Activated T-helper 1 cell treated with anti-CD3 and anti-CD28 coated beads, Interleukin-12 subunit alpha, Interleukin-12 subunit beta, Interleukin-2, Interleukin-4 antibody, amounts not matched to agents 30 ng/mL and 10 ng/mL and 1 ng/mL, durations not matched to agents 14 hours and 24 hours and 36 hours (primary cell): ENCODE measurements at regions of chr12 and their contacts with region 1.

Region 1: DNA sequence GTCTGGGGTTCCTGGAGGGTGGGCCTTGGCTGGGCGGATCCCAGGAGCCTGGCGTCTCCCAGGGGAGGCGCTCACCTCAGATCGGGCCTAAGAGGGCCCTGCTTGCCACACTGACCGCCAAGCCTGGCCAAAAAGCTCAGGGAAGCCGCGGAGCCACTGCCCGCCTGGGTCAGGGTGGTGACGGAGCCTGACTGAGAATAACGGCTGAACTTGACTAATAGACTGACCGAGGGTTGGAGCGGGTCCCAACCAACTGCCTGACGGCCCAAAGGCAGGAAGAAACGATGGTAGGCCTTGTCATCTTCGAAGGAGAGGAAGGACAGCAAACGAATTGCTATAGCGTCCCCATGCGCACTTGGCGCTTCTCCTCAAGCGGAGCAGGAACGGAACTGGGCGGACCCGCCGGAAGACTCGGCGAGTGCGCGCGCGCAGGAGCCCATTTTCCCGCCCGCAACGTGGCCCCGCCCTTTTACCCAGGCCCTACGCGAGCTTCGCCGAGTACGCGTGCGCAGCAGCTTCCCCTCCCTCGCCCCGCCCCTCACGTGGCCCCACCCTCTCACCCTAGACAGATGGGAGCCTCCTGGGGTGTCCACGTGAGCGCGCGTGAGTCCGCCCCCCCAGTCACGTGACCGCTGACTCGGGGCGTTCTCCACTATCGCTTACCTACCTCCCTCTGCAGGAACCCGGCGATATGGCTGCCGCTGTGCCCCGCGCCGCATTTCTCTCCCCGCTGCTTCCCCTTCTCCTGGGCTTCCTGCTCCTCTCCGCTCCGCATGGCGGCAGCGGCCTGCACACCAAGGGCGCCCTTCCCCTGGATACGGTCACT is at the starts of genes ERP29 and TMEM116:
- DNase-seq: peak; percentile 98
- H3K4me3 Mint-ChIP-seq: peak within 1 kb of the TSS; percentile 87
- H3K27ac Mint-ChIP-seq: peak within 1 kb of the TSS; percentile 89
- H3K4me1 Mint-ChIP-seq: peaks cover 51% of the 10 kb centered on the region
- H3K27me3 Mint-ChIP-seq: no peaks in the 10 kb centered on the region
- total RNA-seq, gene ERP29: 60.9 and 62.5 TPM in 2 replicates
- total RNA-seq, gene TMEM116: 10.6 and 11.0 TPM in 2 replicates

Region 2: DNA sequence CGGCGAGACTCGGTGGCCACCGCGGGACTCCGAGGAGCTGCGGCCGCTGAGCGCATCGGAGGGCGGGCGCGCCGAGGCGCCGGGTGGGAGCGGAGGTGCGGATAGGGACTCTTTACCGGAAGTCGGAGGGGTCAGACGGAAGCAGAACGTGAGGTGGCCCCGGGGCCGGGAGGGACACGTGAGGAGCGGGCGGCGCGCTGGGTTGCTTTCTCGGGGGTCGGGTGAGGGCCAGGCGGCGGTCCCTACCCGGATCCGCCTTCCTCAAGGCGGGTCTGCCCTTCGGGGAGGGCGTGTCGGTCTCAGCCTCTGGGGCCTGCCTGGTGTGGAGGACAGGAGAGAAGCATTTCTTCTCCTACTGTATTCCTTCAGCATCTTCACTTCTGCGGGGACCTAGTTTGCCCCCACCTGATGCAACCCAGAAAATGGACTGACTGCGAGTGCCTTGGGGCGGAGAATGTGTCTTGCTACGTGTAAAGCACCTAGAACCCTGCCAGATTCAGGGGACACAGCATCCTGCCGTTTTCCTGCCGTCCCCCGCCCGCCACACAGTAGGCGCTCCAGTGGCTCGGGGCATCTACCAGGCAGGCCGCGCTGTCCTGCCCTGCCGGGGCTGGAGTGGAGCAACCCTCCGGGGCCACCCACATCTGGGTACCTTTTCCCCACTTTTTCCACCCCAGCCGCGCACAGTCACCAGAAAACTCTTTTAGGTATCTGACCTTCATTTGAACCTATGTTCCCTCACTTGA is 413.4 kb before region 1 on chr12:
- intact Hi-C with region 1: loop called (anchors 2 kb)
- DNase-seq: peak; percentile 80
- H3K4me3 Mint-ChIP-seq: peak overlapping the region; percentile 79
- H3K27ac Mint-ChIP-seq: peak overlapping the region; percentile 68
- H3K4me1 Mint-ChIP-seq: peaks cover 29% of the 10 kb centered on the region
- H3K27me3 Mint-ChIP-seq: no peaks in the 10 kb centered on the region

Region 3: GRCh38 chr12:111942557-111942956 is 70.4 kb before region 1 on chr12:
- intact Hi-C with region 1: loop called (anchors 1 kb)
- DNase-seq: no peak
- H3K4me3 Mint-ChIP-seq: no peak overlapping the region
- H3K27ac Mint-ChIP-seq: peak overlapping the region; percentile 27
- H3K4me1 Mint-ChIP-seq: peaks cover 23% of the 10 kb centered on the region
- H3K27me3 Mint-ChIP-seq: no peaks in the 10 kb centered on the region

Region 4: GRCh38 chr12:111993292-111994150 is 19.5 kb before region 1 on chr12:
- intact Hi-C with region 1: loop called (anchors 1 kb)
- DNase-seq: peak; percentile 30
- H3K4me3 Mint-ChIP-seq: peak overlapping the region; percentile 78
- H3K27ac Mint-ChIP-seq: peak overlapping the region; percentile 81
- H3K4me1 Mint-ChIP-seq: peaks cover 67% of the 10 kb centered on the region
- H3K27me3 Mint-ChIP-seq: no peaks in the 10 kb centered on the region

Region 5: DNA sequence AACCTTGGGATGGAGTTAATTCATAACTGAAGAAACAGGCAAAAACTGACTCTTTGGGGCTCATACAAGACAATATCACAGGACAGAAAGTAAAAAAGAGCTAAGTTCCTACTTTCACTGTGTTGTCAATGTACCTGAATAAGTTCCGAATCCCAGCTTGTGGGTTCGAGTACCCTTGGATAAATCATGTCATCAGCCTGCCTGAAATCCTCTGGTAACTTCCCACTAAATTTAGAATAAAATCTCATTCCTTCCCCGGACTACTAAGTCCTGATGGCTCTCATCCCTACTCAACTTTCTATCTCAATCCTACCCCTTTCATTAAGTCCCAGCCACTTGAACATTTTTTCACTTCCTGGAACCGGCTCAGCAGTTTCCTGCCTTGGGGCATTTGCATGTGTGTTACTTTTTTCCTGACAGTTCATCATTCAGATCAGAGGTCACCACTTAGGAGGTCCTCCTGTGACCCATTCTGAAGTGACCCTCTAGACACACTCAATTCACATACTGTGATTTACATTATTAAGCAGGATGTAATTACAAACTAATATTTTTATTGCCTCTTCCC is 12.9 kb after region 1 on chr12:
- intact Hi-C with region 1: loop called (anchors 1 kb)
- DNase-seq: no peak
- H3K4me3 Mint-ChIP-seq: peak overlapping the region; percentile 1
- H3K27ac Mint-ChIP-seq: peak overlapping the region; percentile 64
- H3K4me1 Mint-ChIP-seq: peaks cover 31% of the 10 kb centered on the region
- H3K27me3 Mint-ChIP-seq: no peaks in the 10 kb centered on the region

Region 6: GRCh38 chr12:112102127-112102526 is 89.1 kb after region 1 on chr12:
- intact Hi-C with region 1: no loop called
- DNase-seq: no peak
- H3K4me3 Mint-ChIP-seq: no peak overlapping the region
- H3K27ac Mint-ChIP-seq: no peak overlapping the region
- H3K4me1 Mint-ChIP-seq: peaks cover 33% of the 10 kb centered on the region
- H3K27me3 Mint-ChIP-seq: no peaks in the 10 kb centered on the region

Region 7: DNA sequence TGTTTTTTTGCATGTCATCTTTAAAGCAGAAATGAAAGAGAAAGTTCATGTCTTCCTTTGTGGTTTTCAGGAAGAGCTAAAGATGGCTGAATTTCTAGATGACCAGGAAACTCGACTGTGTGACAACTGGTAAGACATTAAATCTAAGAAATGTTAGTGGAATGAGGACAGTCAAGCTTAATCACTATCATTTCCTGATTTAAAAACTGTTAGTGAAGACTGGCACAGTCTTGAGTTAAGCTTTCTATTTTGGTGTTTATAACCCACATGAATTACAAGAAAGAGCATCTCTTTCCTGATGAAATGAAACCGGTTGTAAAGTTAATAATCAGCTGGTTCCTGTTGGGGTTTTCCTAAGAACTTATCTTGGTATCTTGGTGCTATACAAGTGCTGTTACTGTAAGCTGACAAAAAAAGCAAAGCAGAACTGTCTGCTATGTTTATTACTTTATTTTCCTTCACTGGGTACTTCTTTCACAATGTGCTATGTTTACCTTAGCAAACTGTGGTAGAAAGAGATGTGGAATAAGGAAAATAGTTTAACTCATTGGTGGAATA is 117.5 kb after region 1 on chr12:
- intact Hi-C with region 1: loop called (anchors 1 kb)
- DNase-seq: no peak
- H3K4me3 Mint-ChIP-seq: peak overlapping the region; percentile 77
- H3K27ac Mint-ChIP-seq: peak overlapping the region; percentile 79
- H3K4me1 Mint-ChIP-seq: peaks cover 55% of the 10 kb centered on the region
- H3K27me3 Mint-ChIP-seq: no peaks in the 10 kb centered on the region